Motor neuron (in vitro differentiated cells): ENCODE measurements at regions of chr14 and their contacts with region 1.

Region 1: DNA sequence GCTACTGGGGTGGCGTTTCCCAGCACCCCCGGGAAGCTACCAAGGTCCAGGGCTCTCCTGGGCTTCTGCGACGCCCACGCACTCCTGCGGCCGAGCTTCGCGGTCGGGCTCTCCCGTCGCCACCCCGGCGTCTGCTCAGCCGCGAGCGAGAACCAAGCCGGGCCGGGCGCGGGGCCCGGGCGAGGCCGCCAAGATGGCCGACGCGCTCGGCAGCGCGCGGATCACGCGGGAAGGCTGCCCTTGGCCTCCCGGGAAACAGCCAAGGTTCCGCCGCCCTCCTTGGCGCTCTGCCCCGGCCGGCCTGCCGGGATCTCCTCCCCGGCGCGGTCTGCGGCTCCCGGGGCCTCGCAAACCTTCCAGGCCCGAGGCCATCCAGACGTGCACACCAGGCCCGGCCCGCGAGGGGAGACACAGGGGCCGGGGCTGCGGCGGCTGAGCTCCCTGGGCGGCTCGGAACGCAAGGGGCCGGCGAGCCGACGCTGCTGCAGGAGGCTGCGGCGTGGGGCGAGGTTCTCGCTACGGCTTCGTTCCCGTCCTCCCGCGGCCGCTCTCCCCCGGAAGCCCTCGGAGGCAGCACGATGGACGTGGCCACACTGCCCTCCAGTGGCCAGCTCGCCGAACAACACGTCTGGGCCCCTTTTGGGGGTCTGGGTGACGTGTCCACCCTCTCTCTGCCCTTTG is 23.5 kb upstream of the ZFP36L1 start:
- ATAC-seq: peak; percentile 63 to 97 (median 96)
- H3K4me3 ChIP-seq: peak overlapping the region; percentile 23 to 36 (median 31)
- H3K27ac ChIP-seq: peak overlapping the region; percentile 96 to 97
- H3K4me1 ChIP-seq: peaks cover 24 to 29% of the 10 kb centered on the region in 2 donors

Region 2: GRCh38 chr14:67943947-67944346 is 872.5 kb before region 1 on chr14:
- in situ Hi-C with region 1: loop called in 7 of 9 experiments (anchors 10 to 25 kb)
- ATAC-seq: peak; percentile 38 to 77 (median 58)
- H3K4me3 ChIP-seq: no peak overlapping the region
- H3K27ac ChIP-seq: no peak overlapping the region
- H3K4me1 ChIP-seq: peaks cover 17 to 25% of the 10 kb centered on the region in 2 donors